ENCODE measurements at regions of chr3 and their contacts with region 1.

Region 1: DNA sequence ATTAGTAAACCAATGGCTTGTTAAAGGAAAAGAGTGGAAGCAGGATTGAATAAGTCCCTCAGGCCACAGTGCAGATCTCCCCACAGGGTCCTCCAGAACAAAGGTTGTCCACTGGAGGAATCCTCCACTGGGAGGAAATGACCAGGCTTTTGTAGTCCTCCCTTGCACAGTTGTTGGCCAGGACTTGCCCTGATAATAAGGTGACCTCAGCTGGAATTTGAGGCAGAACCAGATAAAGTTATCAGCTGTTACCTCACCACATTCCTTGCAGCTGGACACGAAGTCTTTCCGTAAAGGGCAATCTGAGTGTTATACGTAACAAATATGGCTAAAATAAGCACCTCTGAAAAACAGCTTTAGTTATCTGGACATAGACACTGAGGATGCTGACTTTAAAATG is 83.5 kb upstream of the NAALADL2 start:
- DNase-seq: peak in 4 of 5 donors; percentile 16 to 51 (median 32)
- ATAC-seq: peak; percentile 89 to 99 (median 98)
- H3K4me3 ChIP-seq: no peak overlapping the region
- H3K27ac ChIP-seq: peak overlapping the region in 8 of 12 donors; percentile 38 to 79 (median 66)
- H3K4me1 ChIP-seq: peaks cover 0 to 13% (median 0%) of the 10 kb centered on the region in 12 donors
- H3K27me3 ChIP-seq: no peaks in the 10 kb centered on the region
- CTCF ChIP-seq: no peak
- POLR2A ChIP-seq: no peak

Region 2: GRCh38 chr3:174440741-174441587 is 334.6 kb before region 1 on chr3:
- intact Hi-C with region 1: loop called in 2 of 10 experiments (anchors 10 kb)
- DNase-seq: peak; percentile 85 to 90 (median 89)
- ATAC-seq: peak; percentile 68 to 93 (median 84)
- H3K4me3 ChIP-seq: peak overlapping the region; percentile 65 to 84 (median 74)
- H3K27ac ChIP-seq: peak overlapping the region; percentile 88 to 98 (median 96)
- H3K4me1 ChIP-seq: peaks cover 0 to 29% (median 9%) of the 10 kb centered on the region in 12 donors
- H3K27me3 ChIP-seq: no peaks in the 10 kb centered on the region
- CTCF ChIP-seq: peak in 2 of 12 donors; percentile 25 to 30
- POLR2A ChIP-seq: no peak

Region 3: GRCh38 chr3:174791161-174791560 is 15.6 kb after region 1 on chr3:
- intact Hi-C with region 1: loop called in 1 of 10 experiments (anchors 2 kb)
- DNase-seq: no peak
- ATAC-seq: no peak
- H3K4me3 ChIP-seq: no peak overlapping the region
- H3K27ac ChIP-seq: no peak overlapping the region
- H3K4me1 ChIP-seq: peaks cover 0 to 9% (median 0%) of the 10 kb centered on the region in 12 donors
- H3K27me3 ChIP-seq: no peaks in the 10 kb centered on the region
- CTCF ChIP-seq: no peak
- POLR2A ChIP-seq: no peak

Region 4: GRCh38 chr3:174810254-174810653 is 34.7 kb after region 1 on chr3:
- intact Hi-C with region 1: no loop called
- DNase-seq: no peak
- ATAC-seq: no peak
- H3K4me3 ChIP-seq: no peak overlapping the region
- H3K27ac ChIP-seq: no peak overlapping the region
- H3K4me1 ChIP-seq: no peaks in the 10 kb centered on the region
- H3K27me3 ChIP-seq: no peaks in the 10 kb centered on the region
- CTCF ChIP-seq: no peak
- POLR2A ChIP-seq: no peak

Region 5: GRCh38 chr3:175798326-175798725 is 1022.7 kb after region 1 on chr3:
- intact Hi-C with region 1: no loop called
- DNase-seq: no peak
- ATAC-seq: no peak
- H3K4me3 ChIP-seq: no peak overlapping the region
- H3K27ac ChIP-seq: no peak overlapping the region
- H3K4me1 ChIP-seq: no peaks in the 10 kb centered on the region
- H3K27me3 ChIP-seq: no peaks in the 10 kb centered on the region
- CTCF ChIP-seq: no peak
- POLR2A ChIP-seq: no peak